Activated CD4-positive, alpha-beta memory T cell treated with anti-CD3 and anti-CD28 coated beads for 36 hours (primary cell): ENCODE measurements at regions of chr11 and their contacts with region 1.

Region 1: GRCh38 chr11:14454861-14455632 is 44.6 kb downstream of the COPB1 start:
- DNase-seq: no peak
- H3K4me3 Mint-ChIP-seq: no peak overlapping the region
- H3K27ac Mint-ChIP-seq: no peak overlapping the region
- H3K4me1 Mint-ChIP-seq: no peaks in the 10 kb centered on the region
- H3K27me3 Mint-ChIP-seq: no peaks in the 10 kb centered on the region

Region 2: DNA sequence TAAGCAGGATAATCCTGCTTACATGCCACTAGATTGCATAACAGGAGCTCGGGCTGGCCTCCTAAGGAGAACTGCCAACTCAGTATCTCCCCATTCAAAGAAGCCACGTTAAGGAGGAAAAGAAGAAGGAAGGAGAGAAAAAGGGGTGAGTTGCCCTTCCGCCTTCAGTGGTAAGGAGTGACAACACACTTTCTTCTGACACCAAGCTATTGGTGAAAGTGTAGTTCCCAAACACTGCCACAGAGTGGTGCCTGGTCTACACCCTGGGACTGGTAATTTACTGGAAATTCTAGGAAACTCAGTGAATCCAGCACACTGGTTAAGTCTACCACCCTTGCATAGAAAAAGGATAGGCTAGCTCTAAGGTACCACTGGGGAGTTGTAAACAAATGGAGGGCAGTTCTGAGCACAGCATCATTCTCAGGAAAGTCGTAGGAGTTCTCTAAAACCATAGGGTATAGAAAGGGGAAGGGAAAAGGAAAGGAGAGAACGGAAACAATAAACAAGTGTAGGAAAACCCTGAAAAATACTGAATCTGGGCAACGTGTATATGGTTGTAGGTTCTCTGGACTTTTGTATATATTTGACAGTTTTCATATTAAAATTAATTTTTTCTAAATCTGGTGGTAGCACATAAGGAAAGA is 154.3 kb before region 1 on chr11:
- CTCF ChIA-PET with region 1: interaction called, 147 read pairs
- POLR2A ChIA-PET with region 1: interaction called, 4 read pairs
- intact Hi-C with region 1: loop called (anchors 2 kb)
- DNase-seq: peak; percentile 66
- H3K4me3 Mint-ChIP-seq: no peak overlapping the region
- H3K27ac Mint-ChIP-seq: no peak overlapping the region
- H3K4me1 Mint-ChIP-seq: peaks cover 2% of the 10 kb centered on the region
- H3K27me3 Mint-ChIP-seq: no peaks in the 10 kb centered on the region

Region 3: DNA sequence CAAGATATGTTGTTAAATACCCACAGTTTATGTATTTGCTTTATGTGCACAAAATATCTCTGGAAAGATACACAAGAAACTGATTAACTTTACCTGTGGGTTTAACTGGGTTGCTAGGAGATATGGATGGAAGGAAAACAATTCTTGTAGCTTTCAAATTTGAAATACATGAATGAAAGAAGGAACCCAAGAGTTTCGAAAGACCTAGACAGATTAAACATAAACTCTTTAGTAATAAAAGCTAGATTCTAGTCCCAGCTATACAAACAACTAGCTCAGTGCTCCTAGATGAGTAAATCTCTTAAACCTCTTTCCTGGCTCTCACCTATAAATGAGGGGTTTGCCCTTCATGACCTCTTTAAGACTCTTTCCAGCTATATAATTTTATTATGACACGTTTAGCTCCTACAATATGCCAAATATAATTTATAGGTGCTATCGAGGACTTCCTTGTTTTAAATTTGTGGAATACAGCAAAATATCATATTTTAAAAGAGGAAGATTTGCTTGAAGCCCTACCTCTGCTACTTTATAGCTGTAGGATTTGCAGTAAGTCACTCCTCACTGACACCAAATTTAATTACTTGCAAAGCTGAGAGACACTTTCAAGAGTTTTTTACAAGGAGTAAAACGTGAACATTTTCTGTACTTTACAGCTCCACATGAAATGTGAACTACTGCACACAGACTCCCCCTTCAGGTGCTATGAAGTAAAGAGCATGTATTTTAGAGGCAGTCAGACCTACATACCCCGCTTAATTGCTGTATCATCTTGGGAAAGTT is 146.7 kb before region 1 on chr11:
- CTCF ChIA-PET with region 1: interaction called, 147 read pairs
- POLR2A ChIA-PET with region 1: interaction called, 4 read pairs
- intact Hi-C with region 1: no loop called
- DNase-seq: no peak
- H3K4me3 Mint-ChIP-seq: no peak overlapping the region
- H3K27ac Mint-ChIP-seq: no peak overlapping the region
- H3K4me1 Mint-ChIP-seq: peaks cover 10% of the 10 kb centered on the region
- H3K27me3 Mint-ChIP-seq: no peaks in the 10 kb centered on the region

Region 4: DNA sequence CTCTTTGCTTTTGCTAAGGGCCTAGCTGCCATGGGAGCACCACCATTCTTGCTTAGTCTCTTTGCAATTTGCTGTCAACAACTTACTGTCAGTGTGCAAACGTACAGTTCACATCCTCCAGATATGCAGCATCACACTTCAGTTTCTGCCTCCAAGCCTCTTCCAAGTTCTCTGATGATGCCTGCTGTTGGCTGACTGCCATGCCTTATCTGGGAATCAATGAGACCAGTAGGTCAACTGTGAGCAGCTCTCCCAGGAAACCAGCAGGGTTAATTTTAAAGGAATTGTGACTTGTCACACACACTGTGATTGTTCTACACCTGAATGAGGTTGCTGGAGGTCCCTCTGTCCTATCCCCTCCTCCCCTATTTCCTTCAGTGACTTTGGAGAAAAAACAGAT is 11.4 kb before region 1 on chr11:
- CTCF ChIA-PET with region 1: interaction called, 11 read pairs
- POLR2A ChIA-PET with region 1: no interaction called
- intact Hi-C with region 1: no loop called
- DNase-seq: no peak
- H3K4me3 Mint-ChIP-seq: no peak overlapping the region
- H3K27ac Mint-ChIP-seq: no peak overlapping the region
- H3K4me1 Mint-ChIP-seq: peaks cover 37% of the 10 kb centered on the region
- H3K27me3 Mint-ChIP-seq: no peaks in the 10 kb centered on the region

Region 5: DNA sequence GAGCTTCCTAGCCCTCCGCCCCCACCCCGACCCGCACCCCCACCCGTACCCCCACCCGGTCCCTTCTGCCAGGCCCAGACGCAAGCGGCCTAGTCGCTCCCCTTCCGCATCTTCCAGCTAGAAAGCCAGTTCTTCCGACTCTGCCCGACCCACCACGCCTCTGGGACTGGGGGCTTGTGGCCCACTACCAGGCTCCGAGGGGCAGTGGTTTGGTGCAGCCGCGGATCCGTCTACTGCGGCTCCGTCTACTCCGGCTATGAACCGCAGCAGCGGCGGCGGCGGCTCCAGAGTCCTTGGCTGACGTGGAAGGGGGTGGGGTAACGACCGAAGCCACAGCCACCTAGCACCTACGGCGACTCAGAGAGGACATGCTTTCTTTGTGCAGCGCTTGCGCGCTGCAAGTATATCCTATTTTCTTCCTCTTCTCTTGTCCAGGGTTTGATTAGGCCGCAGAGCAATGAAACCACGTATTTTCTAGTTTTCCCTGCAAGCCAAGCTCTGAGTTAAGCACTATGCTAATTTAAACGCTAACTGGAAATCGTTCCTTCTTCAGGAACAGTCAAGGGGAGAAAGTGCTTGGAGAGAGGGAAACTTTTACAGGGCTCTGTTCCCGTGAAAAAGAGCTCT is 44.6 kb after region 1 on chr11 and contains the start of gene COPB1:
- CTCF ChIA-PET with region 1: interaction called, 10 read pairs
- POLR2A ChIA-PET with region 1: interaction called, 3 read pairs
- intact Hi-C with region 1: no loop called
- DNase-seq: peak; percentile 96
- H3K4me3 Mint-ChIP-seq: peak within 1 kb of the TSS; percentile 96
- H3K27ac Mint-ChIP-seq: peak within 1 kb of the TSS; percentile 97
- H3K4me1 Mint-ChIP-seq: peaks cover 42% of the 10 kb centered on the region
- H3K27me3 Mint-ChIP-seq: no peaks in the 10 kb centered on the region
- total RNA-seq, gene COPB1: 107 to 108 TPM